Activated naive CD8-positive, alpha-beta T cell treated with anti-CD3 and anti-CD28 coated beads, Interleukin-2, amount 10 ng/mL, durations not matched to agents 7 days and 5 days (primary cell): ENCODE measurements at regions of chr12 and their contacts with region 1.

Region 1: GRCh38 chr12:49740930-49741881 is at the start of gene TMBIM6:
- DNase-seq: peak; percentile 96
- ATAC-seq: peak; percentile 93
- H3K4me3 Mint-ChIP-seq: peak within 1 kb of the TSS; percentile 88
- H3K27ac Mint-ChIP-seq: peak within 1 kb of the TSS; percentile 96
- H3K4me1 Mint-ChIP-seq: peaks cover 28% of the 10 kb centered on the region
- H3K27me3 Mint-ChIP-seq: no peaks in the 10 kb centered on the region
- total RNA-seq, gene TMBIM6: 426 to 431 TPM

Region 2: GRCh38 chr12:49623142-49623904 is 117.9 kb before region 1 on chr12 and contains the start of gene PRPF40B:
- POLR2A ChIA-PET with region 1: interaction called, 16 read pairs
- DNase-seq: peak; percentile 92
- ATAC-seq: peak; percentile 83
- H3K4me3 Mint-ChIP-seq: peak within 1 kb of the TSS; percentile 85
- H3K27ac Mint-ChIP-seq: peak within 1 kb of the TSS; percentile 82
- H3K4me1 Mint-ChIP-seq: peaks cover 23% of the 10 kb centered on the region
- H3K27me3 Mint-ChIP-seq: peaks cover 28% of the 10 kb centered on the region
- total RNA-seq, gene PRPF40B: 16.5 to 18.0 TPM

Region 3: GRCh38 chr12:49673446-49674317 is 67.5 kb before region 1 on chr12:
- POLR2A ChIA-PET with region 1: interaction called, 10 read pairs
- DNase-seq: no peak
- ATAC-seq: peak; percentile 25
- H3K4me3 Mint-ChIP-seq: peak overlapping the region; percentile 41
- H3K27ac Mint-ChIP-seq: peak overlapping the region; percentile 83
- H3K4me1 Mint-ChIP-seq: peaks cover 67% of the 10 kb centered on the region
- H3K27me3 Mint-ChIP-seq: no peaks in the 10 kb centered on the region

Region 4: GRCh38 chr12:49763006-49763591 is 21.9 kb after region 1 on chr12:
- POLR2A ChIA-PET with region 1: interaction called, 63 read pairs
- DNase-seq: peak; percentile 79
- ATAC-seq: peak; percentile 59
- H3K4me3 Mint-ChIP-seq: peak overlapping the region; percentile 38
- H3K27ac Mint-ChIP-seq: peak overlapping the region; percentile 82
- H3K4me1 Mint-ChIP-seq: peaks cover 48% of the 10 kb centered on the region
- H3K27me3 Mint-ChIP-seq: no peaks in the 10 kb centered on the region

Region 5: GRCh38 chr12:49828133-49829091 is 87.2 kb after region 1 on chr12 and contains the start of gene NCKAP5L:
- POLR2A ChIA-PET with region 1: interaction called, 17 read pairs
- DNase-seq: peak; percentile 94
- ATAC-seq: peak; percentile 92
- H3K4me3 Mint-ChIP-seq: peak within 1 kb of the TSS; percentile 88
- H3K27ac Mint-ChIP-seq: peak within 1 kb of the TSS; percentile 92
- H3K4me1 Mint-ChIP-seq: peaks cover 23% of the 10 kb centered on the region
- H3K27me3 Mint-ChIP-seq: no peaks in the 10 kb centered on the region
- total RNA-seq, gene NCKAP5L: 10.3 to 11.0 TPM

Region 6: GRCh38 chr12:49855005-49855404 is 113.8 kb after region 1 on chr12:
- POLR2A ChIA-PET with region 1: no interaction called
- DNase-seq: no peak
- ATAC-seq: no peak
- H3K4me3 Mint-ChIP-seq: no peak overlapping the region
- H3K27ac Mint-ChIP-seq: no peak overlapping the region
- H3K4me1 Mint-ChIP-seq: peaks cover 5% of the 10 kb centered on the region
- H3K27me3 Mint-ChIP-seq: peaks cover 29% of the 10 kb centered on the region